Naive thymus-derived CD4-positive, alpha-beta T cell (primary cell): ENCODE measurements at regions of chr7 and their contacts with region 1.

Region 1: DNA sequence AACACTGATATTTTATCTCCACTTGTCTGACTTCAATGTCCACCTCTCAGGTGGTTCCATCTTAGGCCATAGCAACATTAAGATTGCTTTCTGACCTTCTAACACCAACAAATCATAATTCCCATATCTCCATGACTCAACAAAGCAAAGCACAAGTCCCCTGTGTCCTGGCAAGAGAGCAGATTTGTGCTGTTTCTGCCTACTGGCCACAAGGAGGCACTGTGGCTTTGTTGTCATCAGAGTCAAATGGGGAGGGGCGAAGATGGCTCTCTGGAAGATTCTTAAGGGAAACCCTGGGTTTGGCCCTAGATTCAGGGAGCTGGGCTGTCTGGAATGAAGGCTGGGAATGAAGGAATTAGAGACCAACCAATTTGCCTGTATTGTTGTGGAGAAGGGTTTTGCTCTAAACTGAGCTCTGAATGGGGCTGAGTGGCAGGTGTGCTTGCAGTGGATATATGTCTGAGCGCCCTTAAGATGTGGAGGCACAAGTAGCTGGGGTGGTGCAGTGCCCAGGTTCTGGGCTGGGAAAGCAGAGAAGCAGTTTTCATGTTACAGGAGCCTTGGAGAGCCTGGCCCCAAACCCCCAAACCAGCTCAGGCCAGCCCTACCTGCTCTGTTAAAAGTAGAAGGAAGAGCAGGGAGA is 154.8 kb upstream of the PRSS58 start:
- DNase-seq: peak in 8 of 9 donors; percentile 19 to 58 (median 38)
- ATAC-seq: peak; percentile 88
- H3K4me3 ChIP-seq: no peak overlapping the region
- H3K4me3 Mint-ChIP-seq: peak overlapping the region in 6 of 10 donors; percentile 8 to 56 (median 26)
- H3K27ac ChIP-seq: no peak overlapping the region
- H3K27ac Mint-ChIP-seq: peak overlapping the region in 3 of 9 donors; percentile 3 to 69 (median 6)
- H3K4me1 ChIP-seq: peaks cover 0 to 3% of the 10 kb centered on the region in 2 donors
- H3K4me1 Mint-ChIP-seq: peaks cover 4 to 7% (median 6%) of the 10 kb centered on the region in 7 donors
- H3K27me3 ChIP-seq: no peaks in the 10 kb centered on the region
- H3K27me3 Mint-ChIP-seq: peaks cover 0 to 19% (median 0%) of the 10 kb centered on the region in 5 donors

Region 2: GRCh38 chr7:142438235-142438922 is 25.7 kb after region 1 on chr7:
- CTCF ChIA-PET with region 1: interaction called, 5 read pairs
- POLR2A ChIA-PET with region 1: interaction called, 4 read pairs
- intact Hi-C with region 1: loop called in 1 of 2 experiments (anchors 2 kb)
- DNase-seq: peak in 4 of 9 donors; percentile 25 to 37 (median 31)
- ATAC-seq: peak; percentile 71
- H3K4me3 ChIP-seq: no peak overlapping the region
- H3K4me3 Mint-ChIP-seq: peak overlapping the region in 2 of 10 donors; percentile 0 to 4
- H3K27ac ChIP-seq: no peak overlapping the region
- H3K27ac Mint-ChIP-seq: peak overlapping the region in 2 of 9 donors; percentile 8 to 11
- H3K4me1 ChIP-seq: peaks cover 6 to 26% of the 10 kb centered on the region in 2 donors
- H3K4me1 Mint-ChIP-seq: peaks cover 39 to 70% (median 66%) of the 10 kb centered on the region in 7 donors
- H3K27me3 ChIP-seq: no peaks in the 10 kb centered on the region
- H3K27me3 Mint-ChIP-seq: no peaks in the 10 kb centered on the region

Region 3: GRCh38 chr7:143002106-143002505 is 589.4 kb after region 1 on chr7:
- CTCF ChIA-PET with region 1: no interaction called
- POLR2A ChIA-PET with region 1: no interaction called
- intact Hi-C with region 1: loop called (anchors 1 to 10 kb)
- DNase-seq: peak in 1 of 9 donors; percentile 2
- ATAC-seq: no peak
- H3K4me3 ChIP-seq: no peak overlapping the region
- H3K4me3 Mint-ChIP-seq: no peak overlapping the region
- H3K27ac ChIP-seq: no peak overlapping the region
- H3K27ac Mint-ChIP-seq: no peak overlapping the region
- H3K4me1 ChIP-seq: no peaks in the 10 kb centered on the region
- H3K4me1 Mint-ChIP-seq: peaks cover 4 to 9% (median 6%) of the 10 kb centered on the region in 7 donors
- H3K27me3 ChIP-seq: no peaks in the 10 kb centered on the region
- H3K27me3 Mint-ChIP-seq: peaks cover 0 to 22% (median 0%) of the 10 kb centered on the region in 5 donors